PC-9 (cell line): ENCODE measurements at regions of chrX and their contacts with region 1.

Region 1: DNA sequence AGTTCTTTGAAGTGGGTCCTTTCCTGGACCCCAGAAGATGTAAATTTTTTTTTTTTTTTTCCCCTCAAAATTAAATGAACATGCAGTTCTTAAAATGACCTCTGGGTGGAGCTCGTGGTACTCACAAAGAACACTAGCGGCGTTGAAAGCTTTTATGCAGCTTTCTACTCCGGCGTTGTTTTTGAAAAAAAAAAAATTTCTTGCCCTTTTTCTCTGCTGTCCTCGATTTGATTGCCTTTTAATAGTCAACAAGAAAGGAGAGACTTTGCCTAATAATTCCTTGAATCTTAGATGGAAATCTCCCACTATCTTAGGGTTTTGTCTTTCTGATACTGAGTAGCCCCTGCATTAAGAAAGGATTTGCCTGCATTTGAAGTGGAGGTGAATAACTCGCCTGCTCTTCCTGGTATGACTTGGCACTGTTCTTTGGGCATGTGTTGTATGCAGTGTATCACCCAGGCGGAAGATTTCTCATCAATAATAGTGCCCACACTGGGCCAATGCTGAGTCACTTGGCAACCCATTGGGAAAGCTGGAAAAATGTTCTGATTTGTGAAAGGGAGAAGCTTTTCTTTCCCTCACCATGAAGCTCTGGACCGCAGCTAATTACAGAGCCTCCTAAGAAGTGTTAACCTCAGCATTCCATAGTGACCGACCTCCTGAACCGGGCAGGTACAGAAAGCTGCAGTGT is 104.0 kb downstream of the PHEX start:
- DNase-seq: peak; percentile 63 to 93
- H3K4me3 ChIP-seq: peak overlapping the region; percentile 47; the same call in 1 of the 2 replicates
- H3K27ac ChIP-seq: peak overlapping the region; percentile 99
- H3K4me1 ChIP-seq: peaks cover 42% of the 10 kb centered on the region
- H3K27me3 ChIP-seq: no peaks in the 10 kb centered on the region
- CTCF ChIP-seq: peak; percentile 84

Region 2: DNA sequence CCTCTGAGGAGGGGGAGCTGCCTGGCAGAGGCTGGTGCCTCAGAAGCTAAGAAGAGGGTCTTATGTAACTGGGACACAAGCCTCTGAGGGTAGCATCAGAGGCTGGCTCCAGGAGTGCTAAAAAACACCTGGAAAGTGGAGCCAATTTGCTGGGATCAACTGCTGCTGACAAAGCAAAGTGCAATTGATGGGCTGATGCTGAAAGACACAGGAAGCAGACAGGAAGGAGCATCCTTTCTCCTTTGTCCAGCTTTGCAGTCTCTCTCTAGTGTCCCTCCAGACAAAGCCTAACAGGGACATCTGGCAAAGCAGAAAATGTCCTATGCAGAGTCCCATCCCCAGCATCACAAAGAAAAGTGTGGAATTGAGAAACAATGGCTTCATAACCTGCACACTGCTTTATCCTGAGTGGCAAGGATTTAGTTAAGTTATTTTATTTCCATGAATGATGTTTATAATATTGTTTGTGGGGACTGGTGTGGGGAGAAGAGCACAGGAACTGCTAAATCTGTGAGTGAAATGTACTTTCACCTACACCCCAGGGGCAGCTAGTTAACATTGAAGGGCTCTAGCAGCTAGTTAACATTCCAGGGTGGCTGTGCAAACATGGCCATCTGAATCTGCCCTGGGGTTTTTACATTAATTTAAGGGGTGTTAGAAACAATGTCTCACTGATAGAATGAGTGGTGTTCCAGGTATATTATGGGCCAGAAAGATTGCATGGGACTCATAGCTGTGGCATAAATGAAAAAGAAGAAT is 322.3 kb before region 1 on chrX:
- CTCF ChIA-PET with region 1: no interaction called
- POLR2A ChIA-PET with region 1: no interaction called
- intact Hi-C with region 1: no loop called
- DNase-seq: peak in 1 of 2 experiments; percentile 61
- H3K4me3 ChIP-seq: no peak overlapping the region
- H3K27ac ChIP-seq: no peak overlapping the region
- H3K4me1 ChIP-seq: peaks cover 9% of the 10 kb centered on the region; the same call in 1 of the 2 replicates
- H3K27me3 ChIP-seq: no peaks in the 10 kb centered on the region
- CTCF ChIP-seq: no peak

Region 3: DNA sequence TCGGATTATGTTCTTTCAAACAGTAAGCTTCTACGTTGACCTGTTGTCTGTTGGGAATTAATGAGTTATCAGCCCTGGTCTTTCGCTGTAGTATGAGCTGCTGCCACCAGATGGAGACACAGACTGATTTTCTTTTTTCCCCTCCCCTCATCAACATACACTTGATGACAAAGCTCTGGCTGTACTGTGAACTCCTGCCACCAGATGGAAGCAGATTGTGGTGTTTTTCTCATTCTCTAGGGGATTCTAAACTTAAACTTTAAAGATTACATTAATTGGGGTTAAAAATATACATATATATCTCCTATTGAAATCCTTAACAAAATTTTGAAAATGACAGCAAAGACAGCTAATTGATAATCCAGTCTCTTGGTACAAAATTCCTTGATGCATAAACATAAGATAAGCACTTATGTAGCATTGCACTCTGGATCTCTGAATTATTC is 150.8 kb before region 1 on chrX:
- CTCF ChIA-PET with region 1: interaction called, 16 read pairs
- POLR2A ChIA-PET with region 1: no interaction called
- intact Hi-C with region 1: loop called (anchors 1 kb)
- DNase-seq: peak; percentile 61
- H3K4me3 ChIP-seq: no peak overlapping the region
- H3K27ac ChIP-seq: 0 out of 2 replicates have a peak overlapping the region, but pooled peaks have one; percentile 9
- H3K4me1 ChIP-seq: peaks cover 5% of the 10 kb centered on the region; the same call in 1 of the 2 replicates
- H3K27me3 ChIP-seq: no peaks in the 10 kb centered on the region
- CTCF ChIP-seq: peak; percentile 94

Region 4: DNA sequence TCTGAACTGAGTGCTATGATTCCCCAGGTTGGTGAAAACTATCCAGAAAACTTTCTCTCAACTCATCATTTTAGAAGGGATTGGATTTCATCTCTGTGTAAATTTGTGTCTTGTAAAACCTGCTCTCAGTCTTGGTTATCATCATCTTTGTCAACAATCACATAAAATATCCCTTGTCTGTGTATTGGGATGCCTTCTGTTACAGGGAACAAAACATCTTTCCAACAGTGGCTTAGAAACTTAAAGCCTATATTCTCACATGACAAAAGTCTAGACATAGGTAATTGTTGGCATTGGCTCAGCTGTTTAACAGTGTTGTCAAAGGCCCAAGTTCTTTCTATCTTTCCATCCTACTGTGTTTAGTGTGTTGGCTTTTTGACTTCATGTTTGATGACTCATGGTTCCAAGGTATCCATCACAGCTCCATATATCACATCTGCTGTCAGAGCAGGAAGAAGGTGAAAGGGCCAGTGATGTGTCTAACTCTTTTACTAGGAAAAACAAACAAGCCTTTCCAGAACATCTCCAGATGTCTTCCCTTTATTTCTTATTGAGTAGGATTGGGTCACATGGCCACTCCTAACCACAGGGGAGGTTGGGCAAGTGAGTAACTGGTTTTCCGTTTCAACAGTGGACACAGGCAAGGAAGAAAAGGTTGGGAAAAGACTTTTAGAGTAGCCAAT is 39.0 kb before region 1 on chrX:
- CTCF ChIA-PET with region 1: no interaction called
- POLR2A ChIA-PET with region 1: interaction called, 3 read pairs
- intact Hi-C with region 1: loop called (anchors 1 kb)
- DNase-seq: peak; percentile 9 to 84
- H3K4me3 ChIP-seq: no peak overlapping the region
- H3K27ac ChIP-seq: peak overlapping the region; percentile 69
- H3K4me1 ChIP-seq: peaks cover 17% of the 10 kb centered on the region
- H3K27me3 ChIP-seq: no peaks in the 10 kb centered on the region
- CTCF ChIP-seq: no peak

Region 5: DNA sequence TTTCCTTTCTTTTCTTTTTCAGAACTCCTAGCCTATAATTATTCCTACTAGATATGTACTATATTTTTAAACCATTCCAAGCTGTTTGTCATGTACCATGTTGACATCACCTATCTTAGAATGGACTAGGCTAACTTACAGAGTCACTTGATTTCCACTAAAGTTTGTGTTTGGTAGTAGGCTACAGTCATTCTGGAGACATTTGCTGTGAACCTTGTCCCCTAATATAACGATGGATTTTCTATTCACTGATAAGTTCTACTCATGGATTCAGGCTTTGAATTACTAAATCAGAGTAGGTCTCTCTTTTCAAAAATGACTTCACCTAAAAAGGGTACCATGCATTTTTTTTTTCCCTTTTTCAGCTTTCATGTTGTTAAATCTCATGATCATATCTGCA is 10.7 kb before region 1 on chrX:
- CTCF ChIA-PET with region 1: no interaction called
- POLR2A ChIA-PET with region 1: no interaction called
- intact Hi-C with region 1: no loop called
- DNase-seq: no peak
- H3K4me3 ChIP-seq: no peak overlapping the region
- H3K27ac ChIP-seq: 0 out of 2 replicates have a peak overlapping the region, but pooled peaks have one; percentile 79
- H3K4me1 ChIP-seq: peaks cover 39% of the 10 kb centered on the region
- H3K27me3 ChIP-seq: no peaks in the 10 kb centered on the region
- CTCF ChIP-seq: no peak

Region 6: GRCh38 chrX:22365460-22365859 is 229.3 kb after region 1 on chrX:
- CTCF ChIA-PET with region 1: no interaction called
- POLR2A ChIA-PET with region 1: no interaction called
- intact Hi-C with region 1: loop called (anchors 1 kb)
- DNase-seq: peak; percentile 55 to 83
- H3K4me3 ChIP-seq: no peak overlapping the region
- H3K27ac ChIP-seq: peak overlapping the region; percentile 89
- H3K4me1 ChIP-seq: peaks cover 8% of the 10 kb centered on the region
- H3K27me3 ChIP-seq: no peaks in the 10 kb centered on the region
- CTCF ChIP-seq: no peak

Region 7: GRCh38 chrX:22748093-22748999 is 612.2 kb after region 1 on chrX:
- CTCF ChIA-PET with region 1: interaction called, 5 read pairs
- POLR2A ChIA-PET with region 1: no interaction called
- intact Hi-C with region 1: loop called (anchors 10 kb)
- DNase-seq: peak in 1 of 2 experiments; percentile 23
- H3K4me3 ChIP-seq: no peak overlapping the region
- H3K27ac ChIP-seq: no peak overlapping the region
- H3K4me1 ChIP-seq: no peaks in the 10 kb centered on the region
- H3K27me3 ChIP-seq: no peaks in the 10 kb centered on the region
- CTCF ChIP-seq: peak; percentile 79

Region 8: DNA sequence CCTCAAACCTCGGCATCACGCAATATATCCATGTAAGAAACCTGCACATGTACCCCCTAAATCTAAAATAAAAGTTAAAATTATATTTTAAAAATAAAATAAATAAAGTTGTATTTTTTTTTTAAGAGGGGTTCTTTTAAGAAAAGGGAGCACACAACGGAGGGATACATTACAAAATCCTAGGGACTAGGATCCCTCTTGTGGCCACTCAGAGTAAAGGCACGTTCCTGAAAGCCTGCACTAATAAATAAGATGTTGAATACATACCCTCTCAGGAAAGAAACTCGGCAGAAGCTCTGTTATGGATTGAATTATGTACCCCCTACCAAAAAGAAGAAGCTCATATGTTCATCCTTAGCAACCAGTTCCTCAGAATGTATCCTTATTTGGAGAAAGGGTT is 1480.2 kb after region 1 on chrX:
- CTCF ChIA-PET with region 1: no interaction called
- POLR2A ChIA-PET with region 1: no interaction called
- intact Hi-C with region 1: loop called (anchors 10 kb)
- DNase-seq: no peak
- H3K4me3 ChIP-seq: no peak overlapping the region
- H3K27ac ChIP-seq: no peak overlapping the region
- H3K4me1 ChIP-seq: no peaks in the 10 kb centered on the region
- H3K27me3 ChIP-seq: no peaks in the 10 kb centered on the region
- CTCF ChIP-seq: peak; percentile 71